H1 (cell line): ENCODE measurements at regions of chr17 and their contacts with region 1.

Region 1: GRCh38 chr17:17108451-17109049 is 66.3 kb downstream of the MPRIP start:
- DNase-seq: no peak
- H3K4me3 ChIP-seq: no peak overlapping the region
- H3K27ac ChIP-seq: no peak overlapping the region
- H3K4me1 ChIP-seq: peaks cover 0 to 8% (median 4%) of the 10 kb centered on the region in 4 experiments; a peak in 4 of 7 replicates
- H3K27me3 ChIP-seq: no peaks in the 10 kb centered on the region
- CTCF ChIP-seq: peak in 1 of 3 experiments; percentile 27; a peak in 2 of 4 replicates
- EP300 ChIP-seq: no peak
- POLR2A ChIP-seq: no peak
- RAD21 ChIP-seq: peak; percentile 21; a peak in 3 of 4 replicates

Region 2: DNA sequence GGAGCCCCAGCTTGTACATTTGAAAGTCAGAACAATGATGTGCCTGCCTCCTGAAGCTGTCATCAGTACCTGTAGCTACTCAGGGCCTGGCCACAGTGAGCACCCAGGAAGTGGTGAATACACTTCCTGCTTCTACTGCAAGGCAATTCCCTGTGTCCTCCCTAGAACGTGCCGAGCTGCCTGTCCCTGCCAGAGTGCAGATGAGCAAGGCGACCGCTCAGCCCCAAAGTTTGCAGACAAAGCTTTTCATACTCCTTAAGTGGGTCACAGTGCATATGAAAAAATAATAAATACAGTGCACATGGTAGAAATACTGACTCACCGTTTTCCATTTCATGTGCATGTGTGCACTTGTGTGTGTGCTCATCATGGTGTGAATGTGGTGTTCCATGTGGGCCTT is 11.0 kb after region 1 on chr17:
- CTCF ChIA-PET with region 1: interaction called, 23 read pairs
- POLR2A ChIA-PET with region 1: interaction called, 4 read pairs
- DNase-seq: no peak
- H3K4me3 ChIP-seq: no peak overlapping the region
- H3K27ac ChIP-seq: no peak overlapping the region
- H3K4me1 ChIP-seq: no peaks in the 10 kb centered on the region; a peak in 2 of 7 replicates
- H3K27me3 ChIP-seq: no peaks in the 10 kb centered on the region
- CTCF ChIP-seq: no peak
- EP300 ChIP-seq: no peak
- POLR2A ChIP-seq: no peak
- RAD21 ChIP-seq: no peak

Region 3: DNA sequence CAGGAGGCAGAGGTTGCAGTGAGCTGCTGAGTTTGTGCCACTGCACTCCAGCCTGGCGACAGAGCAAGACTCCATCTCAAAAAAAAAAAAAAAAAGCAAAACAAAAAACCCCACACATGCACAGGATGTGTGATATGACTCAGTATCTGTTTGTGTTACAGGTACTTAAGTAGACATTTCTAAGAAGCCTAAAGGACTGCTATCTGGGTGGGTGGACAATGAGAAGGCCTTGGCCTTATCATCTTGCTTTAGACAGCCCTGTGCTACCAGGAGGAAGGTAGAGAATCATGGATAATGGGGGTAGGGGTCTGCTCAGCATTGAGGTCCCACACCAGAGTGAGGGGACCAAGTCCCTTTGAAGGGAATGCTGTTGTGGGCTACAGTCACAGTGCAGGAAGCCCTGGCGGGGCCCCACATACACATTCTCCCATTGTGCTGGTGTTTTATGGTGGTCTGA is 70.8 kb after region 1 on chr17:
- CTCF ChIA-PET with region 1: no interaction called
- POLR2A ChIA-PET with region 1: no interaction called
- DNase-seq: no peak
- H3K4me3 ChIP-seq: no peak overlapping the region
- H3K27ac ChIP-seq: no peak overlapping the region
- H3K4me1 ChIP-seq: no peaks in the 10 kb centered on the region
- H3K27me3 ChIP-seq: no peaks in the 10 kb centered on the region
- CTCF ChIP-seq: no peak
- EP300 ChIP-seq: no peak
- POLR2A ChIP-seq: no peak
- RAD21 ChIP-seq: no peak